Panc1 (cell line): ENCODE measurements at regions of chr1 and their contacts with region 1.

Region 1: DNA sequence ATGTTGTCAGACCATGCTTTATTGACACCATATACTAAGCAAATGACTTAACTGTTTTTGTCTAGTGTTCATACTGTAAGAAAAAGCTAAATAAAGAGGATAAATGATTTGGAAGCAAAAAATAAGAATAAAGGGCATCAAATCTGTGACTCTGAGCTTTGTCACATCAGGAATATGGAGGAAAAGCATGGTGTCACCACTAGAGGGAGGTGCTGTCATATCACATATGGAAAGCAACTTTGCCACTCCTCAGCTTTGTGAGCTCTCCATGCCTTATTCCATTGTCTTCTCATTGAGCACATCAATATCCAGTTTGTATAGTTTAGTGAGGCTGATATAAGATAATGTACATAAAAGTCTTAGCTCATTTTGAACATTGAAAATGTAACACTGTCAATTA is 20.8 kb upstream of the GBP1 start:
- DNase-seq: peak; percentile 22
- ATAC-seq: peak; percentile 85
- H3K4me3 ChIP-seq: no peak overlapping the region
- H3K27ac ChIP-seq: no peak overlapping the region
- H3K4me1 ChIP-seq: no peaks in the 10 kb centered on the region
- H3K27me3 ChIP-seq: 0 out of 2 replicates have a peak, but pooled peaks cover 3% of the 10 kb centered on the region
- CTCF ChIP-seq: peak; percentile 60

Region 2: GRCh38 chr1:88923224-88923623 is 162.6 kb before region 1 on chr1:
- CTCF ChIA-PET with region 1: no interaction called
- POLR2A ChIA-PET with region 1: no interaction called
- in situ Hi-C with region 1: no loop called
- intact Hi-C with region 1: no loop called
- DNase-seq: no peak
- ATAC-seq: no peak
- H3K4me3 ChIP-seq: no peak overlapping the region
- H3K27ac ChIP-seq: no peak overlapping the region
- H3K4me1 ChIP-seq: no peaks in the 10 kb centered on the region
- H3K27me3 ChIP-seq: no peaks in the 10 kb centered on the region
- CTCF ChIP-seq: no peak

Region 3: GRCh38 chr1:88983791-88984559 is 101.8 kb before region 1 on chr1:
- CTCF ChIA-PET with region 1: interaction called, 10 read pairs
- POLR2A ChIA-PET with region 1: no interaction called
- in situ Hi-C with region 1: no loop called
- intact Hi-C with region 1: no loop called
- DNase-seq: peak; percentile 64
- ATAC-seq: peak; percentile 87
- H3K4me3 ChIP-seq: peak overlapping the region; percentile 46 to 61
- H3K27ac ChIP-seq: peak overlapping the region; percentile 68
- H3K4me1 ChIP-seq: peaks cover 17% of the 10 kb centered on the region
- H3K27me3 ChIP-seq: no peaks in the 10 kb centered on the region
- CTCF ChIP-seq: peak; percentile 86

Region 4: DNA sequence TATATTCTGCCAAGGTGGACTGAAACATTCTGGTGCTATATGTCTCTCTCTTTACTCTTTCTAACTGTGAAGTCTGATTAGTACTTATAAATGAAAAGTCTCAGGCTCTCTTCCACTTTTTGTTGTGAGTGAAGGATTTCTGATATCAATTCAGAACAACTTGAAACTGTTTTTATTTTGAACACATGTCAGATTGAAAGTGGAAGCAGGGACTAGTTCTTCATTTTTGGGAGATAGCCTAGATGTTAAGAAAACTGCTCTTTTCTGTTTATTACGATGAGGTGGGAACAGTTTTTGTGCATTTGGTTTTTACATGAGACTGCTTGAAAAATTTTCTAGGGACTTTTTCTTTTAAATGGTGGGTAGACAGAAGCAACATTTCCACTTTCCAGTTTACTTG is 48.6 kb before region 1 on chr1:
- CTCF ChIA-PET with region 1: no interaction called
- POLR2A ChIA-PET with region 1: interaction called, 10 read pairs
- in situ Hi-C with region 1: no loop called
- intact Hi-C with region 1: no loop called
- DNase-seq: no peak
- ATAC-seq: no peak
- H3K4me3 ChIP-seq: no peak overlapping the region
- H3K27ac ChIP-seq: no peak overlapping the region
- H3K4me1 ChIP-seq: no peaks in the 10 kb centered on the region
- H3K27me3 ChIP-seq: no peaks in the 10 kb centered on the region
- CTCF ChIP-seq: no peak

Region 5: DNA sequence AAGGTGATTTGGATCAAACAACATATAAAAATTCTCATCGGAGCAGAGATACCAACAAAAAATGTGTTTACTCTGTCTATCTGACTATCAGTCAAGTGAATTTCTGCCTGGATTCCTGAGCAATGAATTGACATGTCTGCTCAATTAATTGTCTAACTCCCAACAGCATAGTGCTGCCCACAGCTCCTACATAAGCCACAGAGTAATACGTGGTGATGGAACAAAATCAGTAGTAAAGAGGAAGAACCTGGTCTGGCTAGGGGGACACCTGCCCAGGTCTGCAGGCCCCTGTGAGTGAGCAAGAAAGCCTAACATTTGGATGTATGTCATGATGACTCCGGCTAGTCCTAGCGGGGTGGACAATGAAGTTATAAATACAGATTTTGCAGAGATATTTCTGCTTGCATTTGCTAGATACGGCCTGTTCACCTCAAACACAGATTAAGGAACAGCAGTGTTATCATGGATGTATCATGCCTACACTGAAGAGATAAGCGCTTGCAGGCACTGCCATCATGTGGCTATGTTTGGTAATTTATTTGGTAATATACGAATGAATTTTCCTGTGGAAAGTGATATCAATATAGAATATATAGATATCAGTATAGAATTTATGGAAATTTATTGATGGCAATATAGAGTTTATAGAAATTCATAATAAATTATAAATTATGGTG is 369.2 kb after region 1 on chr1:
- CTCF ChIA-PET with region 1: no interaction called
- POLR2A ChIA-PET with region 1: no interaction called
- in situ Hi-C with region 1: no loop called
- intact Hi-C with region 1: loop called (anchors 5 kb)
- DNase-seq: peak; percentile 38
- ATAC-seq: peak; percentile 89
- H3K4me3 ChIP-seq: no peak overlapping the region
- H3K27ac ChIP-seq: no peak overlapping the region
- H3K4me1 ChIP-seq: 0 out of 2 replicates have a peak, but pooled peaks cover 3% of the 10 kb centered on the region
- H3K27me3 ChIP-seq: peaks cover 7% of the 10 kb centered on the region; the same call in 1 of the 2 replicates
- CTCF ChIP-seq: peak; percentile 79

Region 6: DNA sequence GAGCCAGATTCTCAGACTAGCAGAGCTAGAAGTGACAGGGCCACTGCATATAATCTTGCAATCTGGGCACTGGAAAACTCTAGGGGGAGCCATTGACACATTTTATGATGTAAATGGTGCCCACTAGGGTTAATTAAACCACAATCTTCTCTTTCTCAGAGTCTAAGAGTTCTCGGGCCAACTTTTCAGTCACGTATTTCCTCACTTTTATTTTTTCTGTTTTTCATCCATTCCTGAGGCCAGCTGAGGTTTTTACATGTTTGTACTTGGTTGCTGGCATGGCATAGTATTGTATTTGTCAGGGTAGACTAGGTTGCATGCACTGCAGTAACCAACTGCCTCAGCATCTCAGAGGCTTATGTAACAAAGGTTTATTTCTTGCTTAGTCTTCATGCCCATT is 1047.4 kb after region 1 on chr1:
- CTCF ChIA-PET with region 1: no interaction called
- POLR2A ChIA-PET with region 1: no interaction called
- in situ Hi-C with region 1: no loop called
- intact Hi-C with region 1: no loop called
- DNase-seq: no peak
- ATAC-seq: peak; percentile 89
- H3K4me3 ChIP-seq: no peak overlapping the region
- H3K27ac ChIP-seq: no peak overlapping the region
- H3K4me1 ChIP-seq: no peaks in the 10 kb centered on the region
- H3K27me3 ChIP-seq: peaks cover 7% of the 10 kb centered on the region; the same call in 1 of the 2 replicates
- CTCF ChIP-seq: peak; percentile 78